Adrenal gland (tissue), 19 donors: ENCODE measurements at regions of chr10 and their contacts with region 1.

Region 1: DNA sequence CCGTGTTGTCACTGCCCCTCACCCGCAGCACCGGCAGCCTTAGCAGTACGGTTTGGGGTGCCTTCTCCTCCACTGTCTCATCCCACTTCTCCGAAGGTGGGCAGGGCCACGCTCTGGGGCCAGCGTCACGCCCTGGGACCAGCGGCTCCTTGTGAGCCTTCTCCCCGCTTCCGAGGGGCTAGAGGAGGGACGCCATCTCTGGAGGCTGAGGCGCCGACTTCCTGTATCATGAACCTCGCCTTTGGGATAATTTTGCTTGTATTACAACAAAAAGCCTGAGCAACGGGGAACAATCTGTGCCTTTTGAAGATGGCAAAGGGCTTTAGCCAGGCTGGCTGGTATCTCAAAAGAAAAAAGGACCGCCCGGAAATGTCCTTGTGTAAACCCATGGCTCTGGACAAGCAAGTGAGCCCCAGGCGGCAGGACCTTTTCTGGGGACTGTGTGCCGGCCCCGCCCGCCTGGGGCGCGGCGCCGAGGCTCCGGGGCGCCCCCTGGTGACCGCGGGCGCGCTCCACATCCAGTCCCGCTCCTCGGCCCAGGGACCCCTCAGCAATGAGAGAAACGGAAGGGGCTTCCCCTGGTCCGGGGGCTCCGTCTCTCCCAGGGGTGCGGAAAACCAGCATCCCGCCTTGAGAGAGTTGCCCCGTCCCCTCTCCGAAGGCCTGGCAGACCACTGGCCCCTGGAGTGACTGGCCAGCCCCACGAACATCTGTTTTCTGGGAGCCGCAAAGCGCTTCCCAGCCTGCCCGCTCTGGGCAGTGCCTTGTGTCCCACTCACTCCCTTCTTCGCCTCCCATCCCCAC is 3.8 kb downstream of the DEPP1 start:
- DNase-seq: peak in 6 of 7 donors; percentile 70 to 85 (median 75)
- H3K4me3 ChIP-seq: peak overlapping the region in 2 of 4 donors; percentile 26 to 41
- H3K27ac ChIP-seq: peak overlapping the region in 4 of 5 donors; percentile 1 to 73 (median 72)
- H3K4me1 ChIP-seq: peaks cover 34 to 54% of the 10 kb centered on the region in 2 donors
- H3K27me3 ChIP-seq: no peaks in the 10 kb centered on the region
- CTCF ChIP-seq: peak; percentile 56 to 99 (median 88)
- POLR2A ChIP-seq: peak; percentile 34 to 43

Region 2: GRCh38 chr10:44895280-44895679 is 79.5 kb before region 1 on chr10:
- intact Hi-C with region 1: no loop called
- DNase-seq: no peak
- H3K4me3 ChIP-seq: no peak overlapping the region
- H3K27ac ChIP-seq: no peak overlapping the region
- H3K4me1 ChIP-seq: no peaks in the 10 kb centered on the region
- H3K27me3 ChIP-seq: no peaks in the 10 kb centered on the region
- CTCF ChIP-seq: no peak
- POLR2A ChIP-seq: no peak

Region 3: DNA sequence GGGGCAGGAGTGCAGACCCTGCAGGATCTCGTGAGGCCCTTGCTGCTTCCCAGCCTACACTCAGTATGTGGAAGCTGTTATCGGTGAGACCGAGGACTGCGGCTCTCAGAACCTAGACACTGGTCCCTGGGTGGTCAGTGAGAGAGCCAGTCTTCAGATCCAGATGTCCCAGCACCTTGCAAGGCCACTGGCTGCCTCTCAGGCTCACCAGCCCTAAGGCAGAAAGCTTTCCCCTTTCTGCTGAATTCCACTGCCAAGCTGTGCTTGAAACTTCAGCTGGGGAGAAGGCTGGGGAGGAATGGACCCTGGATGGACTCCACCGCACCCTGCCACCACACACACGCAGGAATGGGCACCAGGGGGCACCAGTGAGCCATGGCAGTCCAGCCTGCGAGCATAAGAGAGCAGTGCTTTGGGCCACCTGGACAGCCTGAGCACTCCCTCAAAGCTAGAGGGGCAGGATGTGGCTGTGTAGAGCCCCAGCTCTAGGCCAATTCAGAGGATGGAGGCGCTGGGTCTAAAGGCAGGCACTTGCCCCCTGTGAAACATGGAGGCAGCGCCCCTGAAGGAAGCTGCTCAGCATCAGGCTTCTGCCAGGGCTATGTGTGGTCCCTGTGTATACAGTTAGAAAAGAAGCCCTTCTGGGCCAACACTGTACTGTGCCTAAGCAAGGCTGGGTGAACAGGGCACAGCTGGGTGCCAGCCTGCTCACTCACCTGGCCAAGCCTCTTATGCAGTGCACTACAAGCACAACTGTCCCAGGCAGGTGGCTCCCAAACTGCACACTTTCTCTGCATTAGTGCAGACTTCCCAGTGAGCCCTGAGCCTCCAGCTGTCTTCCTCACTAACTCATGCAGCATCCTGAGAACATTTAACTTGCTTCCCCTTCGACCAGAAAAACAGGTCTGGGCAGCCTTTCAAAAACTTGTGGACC is 42.0 kb before region 1 on chr10:
- intact Hi-C with region 1: loop called (anchors 2 to 5 kb)
- DNase-seq: peak; percentile 84 to 96 (median 92)
- H3K4me3 ChIP-seq: no peak overlapping the region
- H3K27ac ChIP-seq: no peak overlapping the region
- H3K4me1 ChIP-seq: peaks cover under 1 to 24% of the 10 kb centered on the region in 2 donors
- H3K27me3 ChIP-seq: no peaks in the 10 kb centered on the region
- CTCF ChIP-seq: peak; percentile 94 to 98 (median 95)
- POLR2A ChIP-seq: no peak